ENCODE measurements at regions of chr2 and their contacts with region 1.

Region 1: DNA sequence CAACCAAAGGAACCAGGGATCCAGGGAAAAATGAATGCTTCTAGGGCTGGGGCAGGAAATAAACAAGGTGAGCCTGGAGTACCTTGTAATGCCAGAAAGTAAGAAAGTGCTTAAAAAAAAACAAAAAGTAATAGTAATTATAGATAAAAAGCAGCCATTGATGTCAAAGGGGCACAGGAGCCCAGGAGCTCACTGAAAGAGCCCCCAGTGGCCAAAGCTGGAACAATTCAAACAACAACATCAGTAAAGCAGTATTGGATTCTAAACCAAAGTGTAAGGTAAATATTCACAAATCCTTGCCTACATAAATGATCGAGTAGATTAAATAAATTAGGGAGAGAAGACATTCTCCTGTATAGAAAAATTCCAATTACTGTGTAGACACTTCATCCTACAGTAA is 114.3 kb upstream of the ARL4C start:
- DNase-seq: no peak
- H3K4me3 ChIP-seq: no peak overlapping the region
- H3K27ac ChIP-seq: no peak overlapping the region
- H3K4me1 ChIP-seq: no peaks in the 10 kb centered on the region
- H3K27me3 ChIP-seq: no peaks in the 10 kb centered on the region
- CTCF ChIP-seq: no peak
- POLR2A ChIP-seq: no peak

Region 2: GRCh38 chr2:236464140-236464539 is 1852.9 kb after region 1 on chr2:
- intact Hi-C with region 1: loop called (anchors 5 kb)
- DNase-seq: no peak
- H3K4me3 ChIP-seq: no peak overlapping the region
- H3K27ac ChIP-seq: no peak overlapping the region
- H3K4me1 ChIP-seq: no peaks in the 10 kb centered on the region
- H3K27me3 ChIP-seq: no peaks in the 10 kb centered on the region
- CTCF ChIP-seq: no peak
- POLR2A ChIP-seq: no peak

Measured in breast epithelium (tissue), 4 donors.